MCF 10A (cell line): ENCODE measurements at regions of chr20 and their contacts with region 1.

Region 1: GRCh38 chr20:324177-325044 is 941 bp upstream of the SOX12 start:
- DNase-seq: peak; percentile 91
- H3K4me3 Mint-ChIP-seq: peak overlapping the region; percentile 87
- H3K27ac Mint-ChIP-seq: peak overlapping the region; percentile 88
- H3K4me1 Mint-ChIP-seq: peaks cover 11% of the 10 kb centered on the region
- H3K27me3 Mint-ChIP-seq: no peaks in the 10 kb centered on the region
- CTCF ChIP-seq: peak; percentile 25

Region 2: DNA sequence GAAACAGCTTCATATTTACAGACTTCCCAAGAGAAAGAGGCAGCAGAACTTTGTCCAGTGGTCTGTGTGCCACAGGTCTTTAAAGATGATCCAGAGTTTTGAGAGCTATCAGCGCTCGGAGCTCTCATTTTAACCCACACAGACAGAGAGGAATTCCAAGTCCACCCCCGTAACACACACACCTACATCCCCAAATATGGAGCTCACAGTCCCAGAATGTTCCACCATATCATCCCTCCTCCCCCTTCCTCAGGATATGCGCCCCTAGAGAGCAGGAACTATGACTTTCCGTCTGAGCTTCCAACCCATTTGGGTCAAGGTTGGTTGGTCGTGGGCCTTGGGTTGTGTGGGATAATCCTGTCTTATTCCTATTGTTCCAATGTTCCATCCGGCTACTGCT is 134.8 kb before region 1 on chr20 and contains the start of gene DEFB128:
- CTCF ChIA-PET with region 1: no interaction called
- POLR2A ChIA-PET with region 1: no interaction called
- intact Hi-C with region 1: no loop called
- DNase-seq: no peak
- H3K4me3 Mint-ChIP-seq: no peak within 1 kb of the TSS
- H3K27ac Mint-ChIP-seq: no peak within 1 kb of the TSS
- H3K4me1 Mint-ChIP-seq: no peaks in the 10 kb centered on the region
- H3K27me3 Mint-ChIP-seq: peaks cover 62% of the 10 kb centered on the region
- CTCF ChIP-seq: no peak
- total RNA-seq, gene DEFB128: not detected in 2 replicates

Region 3: GRCh38 chr20:235891-236290 is 88.5 kb before region 1 on chr20:
- CTCF ChIA-PET with region 1: interaction called, 53 read pairs
- POLR2A ChIA-PET with region 1: interaction called, 13 read pairs
- intact Hi-C with region 1: no loop called
- DNase-seq: peak; percentile 47
- H3K4me3 Mint-ChIP-seq: no peak overlapping the region
- H3K27ac Mint-ChIP-seq: peak overlapping the region; percentile 39
- H3K4me1 Mint-ChIP-seq: peaks cover 5% of the 10 kb centered on the region
- H3K27me3 Mint-ChIP-seq: peaks cover 25% of the 10 kb centered on the region
- CTCF ChIP-seq: peak; percentile 25

Region 4: DNA sequence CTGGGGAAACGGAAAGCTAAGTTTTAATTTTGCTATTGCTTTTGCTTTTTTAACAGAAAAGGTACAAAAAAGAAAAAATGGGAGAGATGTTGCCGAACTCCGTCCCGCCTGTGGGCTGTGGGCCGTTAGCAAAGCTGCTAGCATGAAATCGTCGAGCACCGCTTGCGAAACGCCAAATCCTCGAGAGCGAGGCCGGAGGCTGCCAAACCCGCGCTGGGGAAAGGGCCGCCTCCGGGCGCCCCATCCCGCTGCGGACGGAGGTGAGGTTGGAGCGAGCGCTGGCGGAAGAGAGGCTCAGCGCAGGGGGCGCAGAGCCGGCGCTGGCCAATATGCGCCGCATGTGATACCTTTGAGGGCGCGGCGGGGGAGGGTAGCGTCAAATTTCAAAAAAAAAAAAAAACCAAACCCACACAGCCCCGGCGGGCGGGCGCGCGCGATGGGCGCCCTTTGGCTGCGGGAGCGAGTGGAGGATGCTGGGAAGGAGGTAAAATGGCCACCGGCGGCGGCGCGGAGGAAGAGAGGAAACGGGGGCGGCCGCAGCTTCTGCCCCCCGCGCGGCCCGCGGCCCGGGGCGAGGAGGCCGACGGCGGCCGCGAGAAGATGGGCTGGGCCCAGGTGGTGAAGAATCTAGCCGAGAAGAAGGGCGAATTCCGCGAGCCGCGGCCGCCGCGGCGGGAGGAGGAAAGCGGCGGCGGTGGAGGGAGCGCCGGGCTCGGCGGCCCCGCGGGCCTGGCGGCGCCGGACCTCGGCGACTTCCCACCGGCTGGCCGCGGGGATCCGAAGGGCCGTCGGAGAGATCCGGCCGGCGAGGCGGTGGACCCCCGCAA is 27.1 kb before region 1 on chr20 and contains the start of gene ZCCHC3:
- CTCF ChIA-PET with region 1: interaction called, 18 read pairs
- POLR2A ChIA-PET with region 1: no interaction called
- intact Hi-C with region 1: loop called (anchors 1 kb)
- DNase-seq: peak; percentile 96
- H3K4me3 Mint-ChIP-seq: peak within 1 kb of the TSS; percentile 93
- H3K27ac Mint-ChIP-seq: peak within 1 kb of the TSS; percentile 99
- H3K4me1 Mint-ChIP-seq: peaks cover 31% of the 10 kb centered on the region
- H3K27me3 Mint-ChIP-seq: no peaks in the 10 kb centered on the region
- CTCF ChIP-seq: no peak
- total RNA-seq, gene ZCCHC3: 11.7 and 12.1 TPM in 2 replicates

Region 5: GRCh38 chr20:347640-348484 is 23.5 kb after region 1 on chr20:
- CTCF ChIA-PET with region 1: interaction called, 6 read pairs
- POLR2A ChIA-PET with region 1: interaction called, 29 read pairs
- intact Hi-C with region 1: no loop called
- DNase-seq: peak; percentile 86
- H3K4me3 Mint-ChIP-seq: peak overlapping the region; percentile 83
- H3K27ac Mint-ChIP-seq: peak overlapping the region; percentile 62
- H3K4me1 Mint-ChIP-seq: peaks cover 16% of the 10 kb centered on the region
- H3K27me3 Mint-ChIP-seq: no peaks in the 10 kb centered on the region
- CTCF ChIP-seq: no peak

Region 6: GRCh38 chr20:381581-382290 is 57.3 kb after region 1 on chr20:
- CTCF ChIA-PET with region 1: interaction called, 3 read pairs
- POLR2A ChIA-PET with region 1: interaction called, 20 read pairs
- intact Hi-C with region 1: no loop called
- DNase-seq: peak; percentile 81
- H3K4me3 Mint-ChIP-seq: peak overlapping the region; percentile 79
- H3K27ac Mint-ChIP-seq: no peak overlapping the region
- H3K4me1 Mint-ChIP-seq: peaks cover 25% of the 10 kb centered on the region
- H3K27me3 Mint-ChIP-seq: no peaks in the 10 kb centered on the region
- CTCF ChIP-seq: no peak

Region 7: DNA sequence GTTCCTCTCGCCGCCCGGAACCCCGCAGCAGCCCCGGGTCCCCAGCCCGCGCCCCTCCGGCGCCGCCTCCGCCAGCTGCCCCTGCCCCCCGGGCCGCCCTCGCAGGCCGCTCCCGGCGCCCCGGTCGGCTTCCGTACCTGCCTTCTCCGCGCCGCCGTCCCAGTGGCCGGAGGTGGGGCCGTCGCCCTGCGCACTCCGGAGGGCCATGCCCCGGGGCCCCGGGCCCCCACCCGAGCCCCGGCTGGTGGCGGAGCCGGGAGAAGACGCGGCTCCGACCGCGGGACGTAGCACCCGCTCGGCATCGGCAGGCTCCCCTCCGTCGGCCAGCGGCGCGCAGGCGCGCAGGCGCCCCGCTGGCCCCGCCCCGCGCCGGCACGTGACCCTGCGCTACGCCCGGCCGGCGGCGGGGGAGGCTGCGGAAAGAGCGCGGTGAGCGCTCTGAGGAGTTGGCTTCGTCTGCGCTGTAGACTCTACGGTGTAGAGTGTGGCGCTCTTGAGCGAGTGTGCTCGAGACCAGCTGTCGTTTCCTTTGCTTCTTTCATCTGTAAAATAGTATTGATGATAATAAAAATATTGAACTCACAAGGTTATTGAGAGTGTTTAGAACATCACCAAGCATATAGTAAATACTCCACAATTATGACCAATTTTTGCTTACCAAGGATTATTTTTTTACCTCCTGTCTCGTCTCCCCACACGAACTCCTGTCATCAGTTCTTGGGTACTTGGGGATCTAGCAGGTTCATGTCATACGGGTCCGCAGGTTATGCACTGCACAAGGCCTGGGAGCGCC is 138.0 kb after region 1 on chr20 and contains the start of gene TBC1D20:
- CTCF ChIA-PET with region 1: no interaction called
- POLR2A ChIA-PET with region 1: interaction called, 34 read pairs
- intact Hi-C with region 1: no loop called
- DNase-seq: peak; percentile 83
- H3K4me3 Mint-ChIP-seq: peak within 1 kb of the TSS; percentile 93
- H3K27ac Mint-ChIP-seq: peak within 1 kb of the TSS; percentile 75
- H3K4me1 Mint-ChIP-seq: peaks cover 23% of the 10 kb centered on the region
- H3K27me3 Mint-ChIP-seq: no peaks in the 10 kb centered on the region
- CTCF ChIP-seq: no peak
- total RNA-seq, gene TBC1D20: 32.5 and 36.0 TPM in 2 replicates

Region 8: DNA sequence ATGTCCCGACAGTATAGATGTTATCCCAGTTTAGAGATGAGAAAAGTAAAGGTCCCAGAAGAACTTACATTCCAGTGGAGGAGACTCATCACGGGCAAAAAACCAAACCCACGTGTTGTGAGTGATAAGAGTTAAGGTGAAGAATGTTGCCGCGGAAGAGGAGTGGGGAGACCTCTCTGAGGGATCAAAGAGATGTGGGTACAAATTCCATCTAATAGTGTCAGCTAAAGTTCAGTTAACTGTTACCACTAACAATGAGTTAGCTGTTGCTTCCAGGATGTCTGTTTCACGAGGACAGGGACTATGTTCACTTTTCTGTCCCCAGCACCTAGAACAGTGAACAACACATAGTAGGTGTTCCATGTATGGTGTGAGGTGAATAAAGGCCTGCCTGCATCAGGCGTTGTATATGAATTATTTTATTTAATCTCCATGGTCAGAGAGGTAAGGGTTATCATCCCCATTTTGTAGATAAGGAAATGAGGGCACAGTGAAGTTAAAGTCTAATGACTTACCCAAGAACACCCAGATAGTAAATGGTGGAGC is 717.5 kb after region 1 on chr20:
- CTCF ChIA-PET with region 1: no interaction called
- POLR2A ChIA-PET with region 1: no interaction called
- intact Hi-C with region 1: no loop called
- DNase-seq: no peak
- H3K4me3 Mint-ChIP-seq: no peak overlapping the region
- H3K27ac Mint-ChIP-seq: no peak overlapping the region
- H3K4me1 Mint-ChIP-seq: no peaks in the 10 kb centered on the region
- H3K27me3 Mint-ChIP-seq: peaks cover 31% of the 10 kb centered on the region
- CTCF ChIP-seq: no peak